Activated naive CD8-positive, alpha-beta T cell treated with anti-CD3 and anti-CD28 coated beads, Interleukin-2, amount 10 ng/mL, durations not matched to agents 7 days and 5 days (primary cell): ENCODE measurements at regions of chr11 and their contacts with region 1.

Region 1: GRCh38 chr11:108222686-108223448 is at the start of gene ATM:
- DNase-seq: peak; percentile 95
- ATAC-seq: peak; percentile 86
- H3K4me3 Mint-ChIP-seq: no peak within 1 kb of the TSS
- H3K27ac Mint-ChIP-seq: no peak within 1 kb of the TSS
- H3K4me1 Mint-ChIP-seq: peaks cover 30% of the 10 kb centered on the region
- H3K27me3 Mint-ChIP-seq: no peaks in the 10 kb centered on the region
- total RNA-seq, gene ATM: 287 to 333 TPM

Region 2: DNA sequence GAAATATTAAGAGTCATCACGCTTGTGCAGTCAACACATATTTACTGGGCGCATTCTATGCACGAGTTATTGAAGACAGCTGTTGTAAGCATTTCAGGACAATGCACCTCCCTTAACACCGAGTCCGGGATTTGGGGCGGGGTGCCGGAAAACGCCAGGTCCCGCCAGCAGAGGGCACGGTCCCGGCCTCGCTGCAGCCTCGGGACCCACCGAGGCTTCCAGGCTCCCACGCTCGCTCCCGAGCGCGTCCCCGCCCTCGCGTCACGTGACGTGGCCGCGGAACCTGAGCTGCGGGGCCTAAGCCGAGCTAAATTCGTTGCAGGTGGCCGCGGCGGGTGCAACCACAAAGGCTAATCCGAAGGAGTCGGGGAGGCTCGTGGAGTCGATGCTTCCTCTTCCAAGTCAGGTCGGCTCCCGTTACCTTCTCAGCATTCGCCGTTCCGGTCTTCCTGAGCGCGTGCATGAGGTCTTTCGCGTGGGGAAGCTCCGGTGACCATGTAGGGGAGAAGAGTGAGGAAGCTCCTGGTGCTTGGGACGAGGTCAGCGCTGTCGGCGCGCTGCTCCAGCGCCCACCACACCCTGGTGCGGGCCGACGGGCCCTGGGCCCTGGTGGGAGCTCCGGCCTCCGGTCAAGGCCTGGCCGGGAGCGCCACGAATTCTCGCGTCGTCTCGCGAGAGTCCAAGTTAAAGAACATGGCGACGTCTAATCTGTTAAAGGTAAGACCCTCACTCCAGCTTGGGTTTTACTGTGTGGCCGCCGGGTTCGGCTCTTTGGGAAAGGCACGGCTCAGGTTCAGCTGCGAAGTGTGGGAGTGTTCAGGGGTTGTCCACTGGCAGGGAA is 214.0 kb before region 1 on chr11 and contains the start of gene CUL5:
- POLR2A ChIA-PET with region 1: interaction called, 10 read pairs
- DNase-seq: peak; percentile 96
- ATAC-seq: peak; percentile 91
- H3K4me3 Mint-ChIP-seq: peak within 1 kb of the TSS; percentile 96
- H3K27ac Mint-ChIP-seq: peak within 1 kb of the TSS; percentile 93
- H3K4me1 Mint-ChIP-seq: peaks cover 12% of the 10 kb centered on the region
- H3K27me3 Mint-ChIP-seq: no peaks in the 10 kb centered on the region
- total RNA-seq, gene CUL5: 29.3 to 30.2 TPM

Region 3: GRCh38 chr11:108237058-108237481 is 14.2 kb after region 1 on chr11:
- POLR2A ChIA-PET with region 1: interaction called, 489 read pairs
- DNase-seq: no peak
- ATAC-seq: peak; percentile 24
- H3K4me3 Mint-ChIP-seq: peak overlapping the region; percentile 70
- H3K27ac Mint-ChIP-seq: peak overlapping the region; percentile 93
- H3K4me1 Mint-ChIP-seq: peaks cover 68% of the 10 kb centered on the region
- H3K27me3 Mint-ChIP-seq: no peaks in the 10 kb centered on the region